OCI-LY7 (cell line): ENCODE measurements at regions of chr12 and their contacts with region 1.

Region 1: GRCh38 chr12:41103614-41104013 is 84.5 kb upstream of the PDZRN4 start:
- DNase-seq: no peak
- H3K4me3 ChIP-seq: no peak overlapping the region
- H3K27ac ChIP-seq: no peak overlapping the region
- H3K4me1 ChIP-seq: no peaks in the 10 kb centered on the region
- CTCF ChIP-seq: no peak

Region 2: GRCh38 chr12:40907115-40907521 is 196.5 kb before region 1 on chr12:
- CTCF ChIA-PET with region 1: no interaction called
- POLR2A ChIA-PET with region 1: no interaction called
- intact Hi-C with region 1: no loop called
- DNase-seq: no peak
- H3K4me3 ChIP-seq: no peak overlapping the region
- H3K27ac ChIP-seq: no peak overlapping the region
- H3K4me1 ChIP-seq: no peaks in the 10 kb centered on the region
- CTCF ChIP-seq: no peak

Region 3: GRCh38 chr12:41051954-41052353 is 51.7 kb before region 1 on chr12:
- CTCF ChIA-PET with region 1: no interaction called
- POLR2A ChIA-PET with region 1: no interaction called
- intact Hi-C with region 1: loop called (anchors 5 kb)
- DNase-seq: no peak
- H3K4me3 ChIP-seq: no peak overlapping the region
- H3K27ac ChIP-seq: no peak overlapping the region
- H3K4me1 ChIP-seq: no peaks in the 10 kb centered on the region
- CTCF ChIP-seq: no peak

Region 4: DNA sequence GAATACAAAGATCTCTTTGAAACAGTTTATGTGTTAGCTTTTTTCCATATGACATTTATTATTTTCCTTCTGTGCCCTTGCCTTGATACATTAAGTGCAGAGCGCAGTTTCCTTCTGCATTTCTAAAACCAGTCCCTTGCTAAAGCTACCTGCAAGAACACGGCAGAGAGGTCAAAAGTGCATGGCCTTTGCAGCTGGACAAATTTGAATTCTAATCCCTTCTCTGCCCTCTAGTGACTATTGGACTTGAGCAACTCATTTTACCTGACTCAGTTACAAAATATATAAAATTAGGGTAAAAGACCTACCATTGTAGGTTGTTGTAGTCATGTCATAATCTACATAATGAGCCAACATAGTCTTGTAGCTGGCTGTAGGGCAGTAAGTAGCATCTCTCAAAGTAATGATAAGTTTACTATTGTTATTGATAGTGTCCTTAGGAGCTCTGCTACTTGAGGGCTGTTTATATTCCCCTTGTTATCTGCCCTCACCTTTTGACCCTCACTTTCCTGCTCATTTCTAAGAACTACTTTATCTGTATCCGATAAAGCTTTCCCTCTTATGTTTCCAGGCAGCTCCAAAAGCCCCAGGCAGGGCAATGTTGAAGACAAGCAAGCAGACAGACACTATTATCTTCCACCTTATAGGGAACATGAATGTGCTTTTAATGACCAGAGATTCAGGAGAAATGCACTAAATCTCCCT is 35.5 kb before region 1 on chr12:
- CTCF ChIA-PET with region 1: no interaction called
- POLR2A ChIA-PET with region 1: no interaction called
- intact Hi-C with region 1: loop called (anchors 5 kb)
- DNase-seq: no peak
- H3K4me3 ChIP-seq: no peak overlapping the region
- H3K27ac ChIP-seq: no peak overlapping the region
- H3K4me1 ChIP-seq: no peaks in the 10 kb centered on the region
- CTCF ChIP-seq: no peak